BJ (cell line): ENCODE measurements at regions of chr14 and their contacts with region 1.

Region 1: DNA sequence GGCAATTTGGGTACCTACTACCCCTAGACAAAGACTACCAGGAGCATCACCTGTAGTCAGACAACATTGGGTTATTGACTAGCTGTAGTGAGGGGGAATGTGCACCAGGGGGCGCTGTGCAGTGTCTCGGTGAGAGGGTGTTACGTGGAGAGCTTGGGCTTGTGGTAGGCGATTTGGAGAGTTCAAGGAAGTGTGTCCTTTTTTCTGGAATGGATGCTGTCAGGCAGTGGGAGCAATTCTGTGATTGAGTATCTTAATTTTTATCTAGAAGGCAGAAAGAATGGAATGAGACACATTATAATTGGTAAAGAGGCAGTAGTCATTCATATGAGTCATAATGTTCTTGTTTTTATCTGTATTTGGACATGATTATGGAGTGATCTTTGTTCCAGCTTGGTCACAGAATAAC is 187.7 kb downstream of the GALC start:
- DNase-seq: no peak
- H3K4me3 ChIP-seq: no peak overlapping the region
- H3K27me3 ChIP-seq: no peaks in the 10 kb centered on the region
- CTCF ChIP-seq: peak; percentile 64

Region 2: DNA sequence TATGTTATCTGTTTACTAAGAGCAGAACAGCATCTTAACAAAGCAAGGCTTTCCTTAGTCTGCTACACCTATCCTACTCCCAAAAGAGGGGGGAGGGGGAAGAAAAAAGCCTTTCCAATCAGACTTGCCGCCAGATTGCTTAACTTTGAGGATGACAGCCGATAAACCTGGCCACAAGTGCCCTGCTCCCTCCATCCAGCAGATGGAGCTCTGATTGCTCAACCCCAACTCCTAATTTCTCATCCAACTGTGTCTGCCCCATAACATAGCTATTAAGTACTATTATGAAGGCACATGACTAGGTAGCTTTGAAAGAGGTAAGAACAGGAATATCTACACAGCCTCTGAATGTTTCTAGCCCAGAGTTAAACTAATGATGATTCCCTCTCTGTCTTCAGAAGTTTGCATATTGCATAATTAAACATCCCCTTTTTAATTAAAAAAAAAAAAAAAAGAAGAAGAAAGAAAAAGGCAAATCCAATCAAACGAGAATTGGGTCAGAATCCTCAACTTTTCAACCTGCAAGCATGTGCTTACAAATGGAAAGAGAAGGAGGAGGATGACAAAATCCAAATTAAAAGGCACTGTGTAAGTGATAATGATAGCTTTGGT is 59.7 kb before region 1 on chr14:
- CTCF ChIA-PET with region 1: interaction called, 13 read pairs
- POLR2A ChIA-PET with region 1: no interaction called
- DNase-seq: no peak
- H3K4me3 ChIP-seq: no peak overlapping the region
- H3K27me3 ChIP-seq: no peaks in the 10 kb centered on the region
- CTCF ChIP-seq: peak; percentile 76

Region 3: GRCh38 chr14:87816416-87816815 is 11.1 kb after region 1 on chr14:
- CTCF ChIA-PET with region 1: interaction called, 12 read pairs
- POLR2A ChIA-PET with region 1: no interaction called
- DNase-seq: no peak
- H3K4me3 ChIP-seq: no peak overlapping the region
- H3K27me3 ChIP-seq: no peaks in the 10 kb centered on the region
- CTCF ChIP-seq: no peak

Region 4: GRCh38 chr14:87852107-87852506 is 46.8 kb after region 1 on chr14:
- CTCF ChIA-PET with region 1: interaction called, 10 read pairs
- POLR2A ChIA-PET with region 1: no interaction called
- DNase-seq: no peak
- H3K4me3 ChIP-seq: no peak overlapping the region
- H3K27me3 ChIP-seq: no peaks in the 10 kb centered on the region
- CTCF ChIP-seq: no peak

Region 5: DNA sequence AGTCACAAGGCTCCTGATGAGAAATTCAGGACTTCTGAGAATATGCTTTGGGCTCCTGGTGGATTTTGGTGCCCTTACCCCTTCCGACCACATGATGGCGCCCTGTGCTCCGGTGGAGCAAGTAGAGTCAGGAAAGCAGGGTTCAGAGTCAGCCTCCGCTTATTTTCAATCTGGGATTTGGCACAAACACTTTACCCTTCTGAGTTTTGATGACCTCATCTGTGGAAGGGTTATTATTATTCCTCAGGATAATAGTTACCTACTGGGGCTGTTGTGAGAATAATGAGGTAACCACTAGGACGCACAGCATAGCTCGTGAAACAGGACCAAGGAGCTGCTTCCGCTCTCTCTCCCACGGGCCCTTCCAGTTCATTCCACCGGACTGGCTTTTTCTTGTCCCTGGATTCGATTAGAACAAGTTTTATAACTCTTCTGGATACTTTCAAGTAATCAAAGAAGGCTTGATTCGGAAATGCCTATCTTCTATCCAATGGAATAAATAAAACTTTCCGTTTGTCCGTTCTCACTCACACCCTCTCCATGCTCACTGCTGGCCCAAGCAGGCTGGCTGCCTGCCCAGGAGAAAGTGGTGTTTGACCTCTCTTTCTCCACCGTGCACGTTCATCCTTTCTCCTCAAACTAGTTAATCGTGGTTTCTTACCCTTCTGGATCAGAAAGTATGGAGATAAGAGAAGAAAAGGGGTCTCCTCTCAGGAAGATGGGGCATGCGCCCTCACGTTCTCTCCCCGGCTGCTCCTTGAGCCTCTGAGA is 83.1 kb after region 1 on chr14:
- CTCF ChIA-PET with region 1: interaction called, 157 read pairs
- POLR2A ChIA-PET with region 1: no interaction called
- DNase-seq: no peak
- H3K4me3 ChIP-seq: no peak overlapping the region
- H3K27me3 ChIP-seq: no peaks in the 10 kb centered on the region
- CTCF ChIP-seq: peak; percentile 54

Region 6: GRCh38 chr14:87896393-87897380 is 91.4 kb after region 1 on chr14:
- CTCF ChIA-PET with region 1: interaction called, 157 read pairs
- POLR2A ChIA-PET with region 1: no interaction called
- DNase-seq: no peak
- H3K4me3 ChIP-seq: no peak overlapping the region
- H3K27me3 ChIP-seq: no peaks in the 10 kb centered on the region
- CTCF ChIP-seq: peak; percentile 64